ENCODE measurements at regions of chr9 and their contacts with region 1.

Region 1: GRCh38 chr9:74861767-74862474 is 25.8 kb downstream of the TRPM6 start:
- DNase-seq: peak; percentile 17
- H3K4me3 ChIP-seq: no peak overlapping the region
- H3K27ac ChIP-seq: no peak overlapping the region
- H3K4me1 ChIP-seq: peaks cover 5% of the 10 kb centered on the region
- H3K27me3 ChIP-seq: no peaks in the 10 kb centered on the region
- CTCF ChIP-seq: no peak
- POLR2A ChIP-seq: no peak

Region 2: GRCh38 chr9:74001382-74001781 is 860.5 kb before region 1 on chr9:
- CTCF ChIA-PET with region 1: no interaction called
- POLR2A ChIA-PET with region 1: no interaction called
- dilution Hi-C with region 1: no loop called
- intact Hi-C with region 1: no loop called
- DNase-seq: no peak
- H3K4me3 ChIP-seq: no peak overlapping the region
- H3K27ac ChIP-seq: no peak overlapping the region
- H3K4me1 ChIP-seq: no peaks in the 10 kb centered on the region
- H3K27me3 ChIP-seq: no peaks in the 10 kb centered on the region
- CTCF ChIP-seq: no peak
- POLR2A ChIP-seq: no peak

Region 3: GRCh38 chr9:74804018-74804385 is 57.9 kb before region 1 on chr9:
- CTCF ChIA-PET with region 1: no interaction called
- POLR2A ChIA-PET with region 1: no interaction called
- dilution Hi-C with region 1: no loop called
- intact Hi-C with region 1: loop called (anchors 2 kb)
- DNase-seq: peak; percentile 35
- H3K4me3 ChIP-seq: no peak overlapping the region
- H3K27ac ChIP-seq: no peak overlapping the region
- H3K4me1 ChIP-seq: peaks cover 4% of the 10 kb centered on the region
- H3K27me3 ChIP-seq: no peaks in the 10 kb centered on the region
- CTCF ChIP-seq: no peak
- POLR2A ChIP-seq: no peak

Region 4: DNA sequence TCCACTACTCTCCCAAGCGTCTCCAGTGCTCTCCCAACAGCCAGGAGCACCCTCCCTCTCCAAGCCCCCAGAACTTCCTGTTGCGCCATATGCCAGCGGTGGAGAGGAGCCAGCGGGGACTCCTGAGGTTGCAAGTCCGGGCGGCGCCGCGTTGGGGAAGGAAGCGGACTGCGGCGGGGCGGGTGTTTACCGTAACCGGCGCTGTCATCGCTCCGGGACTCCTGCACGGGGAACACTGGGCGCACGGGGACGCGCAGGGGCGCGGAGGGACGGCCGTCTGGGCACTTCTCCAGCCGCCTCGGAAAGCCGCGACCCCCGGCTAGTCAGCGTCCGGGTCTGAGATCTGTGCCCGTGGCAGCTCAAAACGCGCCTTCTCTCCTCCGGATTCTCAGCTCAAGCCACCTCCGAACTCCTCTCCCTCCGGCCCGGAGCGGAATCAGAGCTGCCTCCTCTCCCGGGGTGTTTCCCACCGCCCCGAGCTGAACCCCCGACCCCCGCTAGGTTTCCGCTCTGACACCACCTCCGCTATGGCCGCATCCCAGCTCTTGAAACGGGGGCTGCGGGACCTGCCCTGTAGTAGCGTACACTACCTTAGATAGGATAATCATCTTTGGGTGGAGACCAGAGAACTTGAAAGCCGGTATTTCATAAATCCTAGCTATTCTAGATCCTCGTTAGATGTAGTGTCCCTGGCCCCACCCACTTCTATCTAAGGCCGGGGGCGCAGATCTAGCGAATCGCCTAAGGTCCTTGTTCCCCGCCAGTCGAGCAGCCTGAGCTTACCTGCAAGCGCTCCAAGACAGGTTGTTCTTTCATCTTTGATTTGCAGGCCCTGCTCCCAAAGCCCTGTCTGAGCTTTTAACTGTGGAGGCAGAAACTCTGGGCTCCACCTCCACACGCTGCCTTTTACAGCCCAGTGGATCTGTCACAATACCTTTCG is 25.4 kb after region 1 on chr9 and contains the start of gene TRPM6:
- CTCF ChIA-PET with region 1: no interaction called
- POLR2A ChIA-PET with region 1: no interaction called
- dilution Hi-C with region 1: no loop called
- intact Hi-C with region 1: loop called (anchors 2 kb)
- DNase-seq: peak; percentile 48
- H3K4me3 ChIP-seq: peak within 1 kb of the TSS; percentile 51 to 59 (median 53)
- H3K27ac ChIP-seq: no peak within 1 kb of the TSS
- H3K4me1 ChIP-seq: peaks cover 6% of the 10 kb centered on the region
- H3K27me3 ChIP-seq: peaks cover 2 to 12% of the 10 kb centered on the region in 2 experiments
- CTCF ChIP-seq: no peak
- POLR2A ChIP-seq: no peak
- total RNA-seq, gene TRPM6: 0.12 and 0.22 TPM in 2 replicates

Region 5: GRCh38 chr9:75083188-75083970 is 221.5 kb after region 1 on chr9:
- CTCF ChIA-PET with region 1: no interaction called
- POLR2A ChIA-PET with region 1: no interaction called
- dilution Hi-C with region 1: no loop called
- intact Hi-C with region 1: no loop called
- DNase-seq: no peak
- H3K4me3 ChIP-seq: no peak overlapping the region
- H3K27ac ChIP-seq: no peak overlapping the region
- H3K4me1 ChIP-seq: peaks cover 4% of the 10 kb centered on the region
- H3K27me3 ChIP-seq: no peaks in the 10 kb centered on the region
- CTCF ChIP-seq: no peak
- POLR2A ChIP-seq: no peak

Region 6: GRCh38 chr9:75715360-75715759 is 853.4 kb after region 1 on chr9:
- CTCF ChIA-PET with region 1: no interaction called
- POLR2A ChIA-PET with region 1: no interaction called
- dilution Hi-C with region 1: no loop called
- intact Hi-C with region 1: no loop called
- DNase-seq: no peak
- H3K4me3 ChIP-seq: no peak overlapping the region
- H3K27ac ChIP-seq: no peak overlapping the region
- H3K4me1 ChIP-seq: no peaks in the 10 kb centered on the region
- H3K27me3 ChIP-seq: no peaks in the 10 kb centered on the region
- CTCF ChIP-seq: no peak
- POLR2A ChIP-seq: no peak